GM12878 (cell line): ENCODE measurements at regions of chr10 and their contacts with region 1.

Region 1: DNA sequence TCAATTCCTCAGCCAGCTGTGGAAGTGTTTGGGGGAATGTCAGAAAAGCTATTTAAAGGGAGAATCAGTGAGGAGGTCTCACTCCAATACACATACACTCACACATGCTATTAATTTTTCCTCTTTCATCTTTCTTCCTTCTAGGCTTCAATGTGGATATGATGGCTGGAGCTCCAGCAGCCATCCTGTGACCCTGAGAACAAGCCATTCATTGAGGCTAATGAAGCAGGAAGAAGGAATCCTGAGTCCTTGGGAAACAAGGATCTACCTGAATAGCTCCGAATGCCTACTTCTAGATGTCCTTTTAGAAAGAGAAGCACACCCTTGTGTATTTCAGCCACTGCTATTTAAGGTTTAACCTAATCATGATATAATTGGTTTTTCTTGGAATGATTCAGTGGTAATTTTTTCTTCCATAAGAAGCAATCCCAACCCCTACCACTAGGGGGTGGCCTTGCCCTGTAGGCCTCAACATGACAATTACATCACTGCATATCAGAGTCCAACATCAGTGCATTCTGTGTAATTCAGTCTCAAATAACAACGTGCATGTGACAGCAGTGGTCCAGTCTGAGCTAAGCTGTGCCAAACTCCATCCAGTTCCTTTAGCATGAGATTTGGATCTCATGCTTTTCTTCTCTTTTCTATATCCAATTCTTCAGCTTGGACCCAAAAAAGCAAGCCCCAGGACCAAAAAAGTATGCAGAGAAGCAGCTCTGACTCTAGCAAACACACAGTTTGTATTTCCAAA is 85.3 kb upstream of the ANKRD1 start:
- DNase-seq: peak; percentile 80
- ATAC-seq: peak; percentile 80
- H3K4me3 ChIP-seq: peak overlapping the region; percentile 29; the same call in 1 of the 2 replicates
- H3K27ac ChIP-seq: peak overlapping the region; percentile 71
- H3K4me1 ChIP-seq: peaks cover 46% of the 10 kb centered on the region
- H3K27me3 ChIP-seq: no peaks in the 10 kb centered on the region
- CTCF ChIP-seq: peak; percentile 89 to 97 (median 93)
- EP300 ChIP-seq: 0 out of 4 replicates have a peak, but pooled peaks of 1 of the 2 experiments have one; percentile 20
- POLR2A ChIP-seq: no peak
- RAD21 ChIP-seq: peak; percentile 96

Region 2: DNA sequence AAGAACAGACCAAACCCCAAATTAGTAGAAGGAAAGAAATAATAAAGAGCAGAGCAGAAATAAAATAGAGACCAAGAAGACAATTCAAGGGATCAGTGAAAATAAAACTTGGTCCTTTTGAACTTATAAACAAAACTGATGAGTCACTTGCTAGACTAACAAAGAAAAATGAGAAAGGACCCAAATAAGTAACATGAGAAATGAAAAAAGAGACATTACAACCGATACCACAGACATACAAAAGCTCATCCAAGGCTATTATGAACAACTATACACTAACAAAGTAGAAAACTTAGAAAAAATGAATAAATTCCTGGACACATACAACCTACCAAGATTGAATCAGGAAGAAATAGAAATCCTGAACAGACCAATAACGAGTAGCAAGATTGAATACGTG is 562.8 kb before region 1 on chr10:
- CTCF ChIA-PET with region 1: no interaction called
- POLR2A ChIA-PET with region 1: no interaction called
- RAD21 ChIA-PET with region 1: no interaction called
- SMC1A ChIA-PET with region 1: no interaction called
- in situ Hi-C with region 1: no loop called
- intact Hi-C with region 1: no loop called
- DNase-seq: no peak
- ATAC-seq: no peak
- H3K4me3 ChIP-seq: no peak overlapping the region
- H3K27ac ChIP-seq: no peak overlapping the region
- H3K4me1 ChIP-seq: no peaks in the 10 kb centered on the region
- H3K27me3 ChIP-seq: no peaks in the 10 kb centered on the region
- CTCF ChIP-seq: no peak
- EP300 ChIP-seq: no peak
- POLR2A ChIP-seq: no peak
- RAD21 ChIP-seq: no peak

Region 3: GRCh38 chr10:90779548-90779947 is 226.6 kb before region 1 on chr10:
- CTCF ChIA-PET with region 1: no interaction called
- POLR2A ChIA-PET with region 1: no interaction called
- RAD21 ChIA-PET with region 1: no interaction called
- SMC1A ChIA-PET with region 1: no interaction called
- in situ Hi-C with region 1: no loop called
- intact Hi-C with region 1: no loop called
- DNase-seq: no peak
- ATAC-seq: no peak
- H3K4me3 ChIP-seq: no peak overlapping the region
- H3K27ac ChIP-seq: no peak overlapping the region
- H3K4me1 ChIP-seq: peaks cover 4% of the 10 kb centered on the region; the same call in 1 of the 2 replicates
- H3K27me3 ChIP-seq: no peaks in the 10 kb centered on the region
- CTCF ChIP-seq: peak in 2 of 3 experiments; percentile 15 to 35; a peak in 2 of 6 replicates
- EP300 ChIP-seq: no peak
- POLR2A ChIP-seq: no peak
- RAD21 ChIP-seq: peak; percentile 18; the same call in 1 of the 2 replicates

Region 4: GRCh38 chr10:90912174-90912573 is 94.0 kb before region 1 on chr10:
- CTCF ChIA-PET with region 1: interaction called, 64 read pairs
- POLR2A ChIA-PET with region 1: interaction called, 3 read pairs
- RAD21 ChIA-PET with region 1: interaction called, 32 read pairs
- SMC1A ChIA-PET with region 1: interaction called, 100 read pairs
- in situ Hi-C with region 1: no loop called
- intact Hi-C with region 1: loop called (anchors 1 kb)
- DNase-seq: no peak
- ATAC-seq: no peak
- H3K4me3 ChIP-seq: no peak overlapping the region
- H3K27ac ChIP-seq: no peak overlapping the region
- H3K4me1 ChIP-seq: no peaks in the 10 kb centered on the region
- H3K27me3 ChIP-seq: no peaks in the 10 kb centered on the region
- CTCF ChIP-seq: no peak
- EP300 ChIP-seq: no peak
- POLR2A ChIP-seq: no peak
- RAD21 ChIP-seq: no peak

Region 5: DNA sequence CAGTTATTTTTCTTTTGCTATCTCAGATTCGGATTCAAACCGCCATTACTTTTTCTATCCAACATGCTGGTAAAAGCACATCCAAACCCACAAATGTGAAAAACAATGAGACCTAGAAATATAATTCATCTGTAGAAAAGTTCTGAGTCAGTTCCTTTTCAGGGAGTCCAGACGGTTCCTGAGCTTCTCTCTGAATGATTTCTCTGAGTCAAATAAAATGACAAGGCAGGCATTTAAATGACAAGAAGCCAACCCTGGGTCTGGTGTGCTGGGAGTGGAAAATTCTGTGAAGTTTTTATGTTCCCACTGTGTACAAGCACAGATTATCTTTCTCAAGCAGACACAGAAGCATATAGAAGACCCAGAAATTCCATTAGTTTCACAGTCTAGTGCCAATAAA is 11.0 kb after region 1 on chr10:
- CTCF ChIA-PET with region 1: interaction called, 41 read pairs
- POLR2A ChIA-PET with region 1: no interaction called
- RAD21 ChIA-PET with region 1: interaction called, 4 read pairs
- SMC1A ChIA-PET with region 1: interaction called, 15 read pairs
- in situ Hi-C with region 1: no loop called
- intact Hi-C with region 1: no loop called
- DNase-seq: no peak
- ATAC-seq: peak; percentile 58
- H3K4me3 ChIP-seq: no peak overlapping the region
- H3K27ac ChIP-seq: no peak overlapping the region; the same call in 1 of the 2 replicates
- H3K4me1 ChIP-seq: no peaks in the 10 kb centered on the region
- H3K27me3 ChIP-seq: no peaks in the 10 kb centered on the region
- CTCF ChIP-seq: no peak
- EP300 ChIP-seq: no peak
- POLR2A ChIP-seq: no peak
- RAD21 ChIP-seq: no peak

Region 6: GRCh38 chr10:91103384-91104192 is 97.4 kb after region 1 on chr10:
- CTCF ChIA-PET with region 1: interaction called, 4 read pairs
- POLR2A ChIA-PET with region 1: no interaction called
- RAD21 ChIA-PET with region 1: interaction called, 3 read pairs
- SMC1A ChIA-PET with region 1: no interaction called
- in situ Hi-C with region 1: no loop called
- intact Hi-C with region 1: loop called (anchors 5 kb)
- DNase-seq: peak; percentile 17
- ATAC-seq: peak; percentile 78
- H3K4me3 ChIP-seq: no peak overlapping the region
- H3K27ac ChIP-seq: no peak overlapping the region
- H3K4me1 ChIP-seq: peaks cover 22% of the 10 kb centered on the region
- H3K27me3 ChIP-seq: no peaks in the 10 kb centered on the region
- CTCF ChIP-seq: no peak
- EP300 ChIP-seq: no peak
- POLR2A ChIP-seq: no peak
- RAD21 ChIP-seq: no peak

Region 7: GRCh38 chr10:91220194-91220953 is 214.2 kb after region 1 on chr10 and contains the start of gene PCGF5:
- CTCF ChIA-PET with region 1: interaction called, 30 read pairs
- POLR2A ChIA-PET with region 1: no interaction called
- RAD21 ChIA-PET with region 1: interaction called, 5 read pairs
- SMC1A ChIA-PET with region 1: interaction called, 6 read pairs
- in situ Hi-C with region 1: no loop called
- intact Hi-C with region 1: no loop called
- DNase-seq: no peak
- ATAC-seq: peak; percentile 99
- H3K4me3 ChIP-seq: peak within 1 kb of the TSS; percentile 99
- H3K27ac ChIP-seq: peak within 1 kb of the TSS; percentile 84
- H3K4me1 ChIP-seq: peaks cover 10% of the 10 kb centered on the region; the same call in 1 of the 2 replicates
- H3K27me3 ChIP-seq: no peaks in the 10 kb centered on the region
- CTCF ChIP-seq: peak in 2 of 3 experiments; percentile 24 to 39; a peak in 3 of 6 replicates
- EP300 ChIP-seq: no peak
- POLR2A ChIP-seq: peak; percentile 82
- RAD21 ChIP-seq: no peak
- polyA plus RNA-seq, gene PCGF5: 33.2 to 35.0 TPM

Region 8: GRCh38 chr10:91298224-91298871 is 292.2 kb after region 1 on chr10:
- CTCF ChIA-PET with region 1: interaction called, 35 read pairs
- POLR2A ChIA-PET with region 1: no interaction called
- RAD21 ChIA-PET with region 1: interaction called, 18 read pairs
- SMC1A ChIA-PET with region 1: interaction called, 18 read pairs
- in situ Hi-C with region 1: no loop called
- intact Hi-C with region 1: no loop called
- DNase-seq: no peak
- ATAC-seq: peak; percentile 93
- H3K4me3 ChIP-seq: peak overlapping the region; percentile 46; the same call in 1 of the 2 replicates
- H3K27ac ChIP-seq: no peak overlapping the region
- H3K4me1 ChIP-seq: peaks cover 5% of the 10 kb centered on the region; the same call in 1 of the 2 replicates
- H3K27me3 ChIP-seq: no peaks in the 10 kb centered on the region
- CTCF ChIP-seq: peak; percentile 90 to 97 (median 90)
- EP300 ChIP-seq: no peak
- POLR2A ChIP-seq: no peak
- RAD21 ChIP-seq: peak; percentile 93